Activated B cell treated with CpG ODN at 0.5 μM for 24 hours (primary cell): ENCODE measurements at regions of chr1 and their contacts with region 1.

Region 1: GRCh38 chr1:158203693-158204457 is 23.2 kb downstream of the CD1D start:
- DNase-seq: no peak
- ATAC-seq: peak; percentile 69
- H3K4me3 Mint-ChIP-seq: peak overlapping the region; percentile 49
- H3K27ac Mint-ChIP-seq: peak overlapping the region; percentile 41
- H3K4me1 Mint-ChIP-seq: peaks cover 23% of the 10 kb centered on the region
- H3K27me3 Mint-ChIP-seq: no peaks in the 10 kb centered on the region
- CTCF ChIP-seq: no peak

Region 2: GRCh38 chr1:157992031-157992832 is 211.6 kb before region 1 on chr1:
- CTCF ChIA-PET with region 1: interaction called, 10 read pairs
- POLR2A ChIA-PET with region 1: no interaction called
- intact Hi-C with region 1: no loop called
- DNase-seq: peak; percentile 46
- ATAC-seq: peak; percentile 68
- H3K4me3 Mint-ChIP-seq: peak overlapping the region; percentile 79
- H3K27ac Mint-ChIP-seq: no peak overlapping the region
- H3K4me1 Mint-ChIP-seq: peaks cover 16% of the 10 kb centered on the region
- H3K27me3 Mint-ChIP-seq: peaks cover 41% of the 10 kb centered on the region
- CTCF ChIP-seq: peak; percentile 30

Region 3: GRCh38 chr1:158185770-158186705 is 17.8 kb before region 1 on chr1:
- CTCF ChIA-PET with region 1: interaction called, 41 read pairs
- POLR2A ChIA-PET with region 1: interaction called, 4 read pairs
- intact Hi-C with region 1: loop called (anchors 2 kb)
- DNase-seq: no peak
- ATAC-seq: no peak
- H3K4me3 Mint-ChIP-seq: no peak overlapping the region
- H3K27ac Mint-ChIP-seq: no peak overlapping the region
- H3K4me1 Mint-ChIP-seq: peaks cover 45% of the 10 kb centered on the region
- H3K27me3 Mint-ChIP-seq: no peaks in the 10 kb centered on the region
- CTCF ChIP-seq: no peak

Region 4: DNA sequence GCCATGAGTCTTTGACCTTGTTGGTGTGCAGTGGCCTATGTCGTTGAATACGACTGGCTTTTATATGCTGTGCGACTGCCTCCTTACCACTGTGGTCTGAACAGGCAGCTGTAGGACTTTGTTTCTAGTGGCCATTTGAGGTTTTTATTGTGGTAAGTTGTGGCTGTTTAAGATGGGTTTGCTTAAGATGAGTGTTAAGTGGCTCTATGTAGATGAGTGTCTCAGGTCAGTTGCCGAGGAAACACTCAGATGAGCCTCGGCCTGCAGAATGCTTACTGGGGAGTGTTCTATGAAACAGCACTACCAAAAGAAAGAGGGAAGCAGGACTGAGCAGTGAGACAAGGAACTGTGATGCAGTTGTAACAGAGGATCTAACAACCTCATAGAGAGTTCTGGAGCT is 70.9 kb after region 1 on chr1:
- CTCF ChIA-PET with region 1: interaction called, 12 read pairs
- POLR2A ChIA-PET with region 1: no interaction called
- intact Hi-C with region 1: loop called (anchors 5 kb)
- DNase-seq: no peak
- ATAC-seq: peak; percentile 85
- H3K4me3 Mint-ChIP-seq: peak overlapping the region; percentile 29
- H3K27ac Mint-ChIP-seq: peak overlapping the region; percentile 73
- H3K4me1 Mint-ChIP-seq: peaks cover 39% of the 10 kb centered on the region
- H3K27me3 Mint-ChIP-seq: no peaks in the 10 kb centered on the region
- CTCF ChIP-seq: no peak

Region 5: DNA sequence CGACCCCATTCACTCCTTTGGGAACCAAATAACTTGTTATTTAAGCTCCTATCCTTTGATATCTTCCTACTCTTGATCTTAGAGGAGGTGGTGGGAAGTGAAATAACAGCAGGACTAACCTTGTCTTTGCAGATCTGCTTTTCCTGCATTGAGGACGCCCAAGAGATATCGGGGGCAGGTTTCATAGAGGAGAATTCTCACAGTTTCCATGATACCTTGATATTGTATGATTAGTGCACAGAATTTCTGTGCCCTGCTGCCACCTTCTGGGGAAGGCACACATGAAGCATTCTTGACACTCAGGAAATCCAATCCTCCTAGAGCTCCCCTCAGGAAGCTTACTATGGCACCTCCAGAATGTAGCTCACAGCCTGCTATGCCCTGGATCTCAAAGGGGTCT is 125.9 kb after region 1 on chr1:
- CTCF ChIA-PET with region 1: interaction called, 232 read pairs
- POLR2A ChIA-PET with region 1: interaction called, 8 read pairs
- intact Hi-C with region 1: loop called (anchors 1 kb)
- DNase-seq: no peak
- ATAC-seq: peak; percentile 47
- H3K4me3 Mint-ChIP-seq: no peak overlapping the region
- H3K27ac Mint-ChIP-seq: no peak overlapping the region
- H3K4me1 Mint-ChIP-seq: peaks cover 26% of the 10 kb centered on the region
- H3K27me3 Mint-ChIP-seq: no peaks in the 10 kb centered on the region
- CTCF ChIP-seq: no peak

Region 6: DNA sequence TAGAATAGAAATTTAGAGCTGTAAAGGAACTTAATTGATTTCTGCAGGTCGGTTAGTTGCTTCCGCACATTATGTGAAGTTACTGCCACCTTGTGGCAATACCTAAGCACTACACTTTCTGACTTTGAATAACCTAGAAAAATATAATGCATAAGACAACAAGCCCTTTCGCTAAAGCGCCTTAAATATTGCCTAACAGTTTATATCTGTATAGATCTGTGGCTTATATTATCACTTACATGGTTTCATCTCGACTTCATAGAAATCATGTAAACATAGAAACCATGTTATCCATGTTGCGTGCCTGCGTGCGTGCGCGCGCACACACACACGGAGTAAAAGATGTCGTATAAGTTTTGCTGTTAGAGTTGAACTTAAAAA is 794.9 kb after region 1 on chr1:
- CTCF ChIA-PET with region 1: interaction called, 23 read pairs
- POLR2A ChIA-PET with region 1: no interaction called
- intact Hi-C with region 1: loop called (anchors 1 kb)
- DNase-seq: no peak
- ATAC-seq: peak; percentile 83
- H3K4me3 Mint-ChIP-seq: no peak overlapping the region
- H3K27ac Mint-ChIP-seq: no peak overlapping the region
- H3K4me1 Mint-ChIP-seq: peaks cover 20% of the 10 kb centered on the region
- H3K27me3 Mint-ChIP-seq: no peaks in the 10 kb centered on the region
- CTCF ChIP-seq: peak; percentile 59